ENCODE measurements at regions of chr10 and their contacts with region 1.

Region 1: DNA sequence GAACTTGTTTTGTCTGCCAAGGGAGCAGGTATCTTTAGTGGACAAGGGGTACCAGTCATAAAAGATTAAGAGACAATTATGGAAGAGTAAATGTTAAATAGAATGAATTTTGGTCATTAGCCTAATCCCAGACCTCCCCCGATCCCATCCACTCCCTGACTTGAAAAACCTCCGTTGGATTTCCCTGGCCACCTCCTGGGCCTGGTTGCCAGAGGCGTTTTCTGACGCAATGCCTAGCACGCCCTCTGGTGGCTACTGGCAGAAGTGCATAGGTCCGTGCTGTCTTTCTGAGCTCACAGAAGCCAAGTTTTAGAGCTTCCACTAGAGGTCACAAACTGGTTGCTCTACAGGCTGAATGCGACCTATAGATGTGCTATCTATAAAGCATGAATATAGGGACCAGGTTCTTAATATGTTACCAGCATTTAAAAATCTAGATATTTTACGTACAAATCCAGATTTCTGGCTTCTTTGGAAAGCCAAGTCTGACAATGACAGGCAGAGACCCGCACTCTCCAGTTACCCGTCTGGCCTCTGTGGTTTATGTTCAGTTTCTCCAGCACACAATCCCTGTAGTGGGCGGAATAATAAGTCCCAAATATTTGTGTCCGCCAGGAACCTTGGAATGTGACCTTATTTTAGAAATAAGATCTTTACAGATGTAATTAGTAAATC is 39.8 kb downstream of the SPOCK2 start:
- DNase-seq: peak; percentile 90
- ATAC-seq: peak; percentile 96
- H3K4me3 ChIP-seq: no peak overlapping the region
- H3K27ac ChIP-seq: no peak overlapping the region
- H3K4me1 ChIP-seq: peaks cover 1% of the 10 kb centered on the region; the same call in 1 of the 2 replicates
- H3K27me3 ChIP-seq: peaks cover 16% of the 10 kb centered on the region
- CTCF ChIP-seq: peak; percentile 100
- POLR2A ChIP-seq: 0 out of 2 replicates have a peak, but pooled peaks have one; percentile 31
- RAD21 ChIP-seq: peak; percentile 100

Region 2: DNA sequence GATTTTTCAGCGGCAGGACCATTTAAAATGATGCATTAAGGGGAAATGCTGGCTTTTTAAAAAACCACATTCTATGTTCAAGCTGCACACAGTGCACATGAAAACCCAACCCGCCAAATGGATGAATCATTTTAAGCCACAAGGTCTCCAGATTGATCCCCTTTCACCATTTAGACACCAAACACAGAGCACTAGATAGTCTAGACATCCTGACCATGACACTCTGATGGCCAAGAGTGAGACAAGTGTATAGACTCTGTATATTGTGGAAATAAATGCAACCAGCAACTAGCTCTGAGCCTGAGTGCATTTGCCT is 226.2 kb before region 1 on chr10:
- CTCF ChIA-PET with region 1: no interaction called
- POLR2A ChIA-PET with region 1: no interaction called
- dilution Hi-C with region 1: no loop called
- in situ Hi-C with region 1: no loop called
- intact Hi-C with region 1: no loop called
- DNase-seq: peak; percentile 49
- ATAC-seq: no peak
- H3K4me3 ChIP-seq: no peak overlapping the region
- H3K27ac ChIP-seq: no peak overlapping the region
- H3K4me1 ChIP-seq: no peaks in the 10 kb centered on the region
- H3K27me3 ChIP-seq: no peaks in the 10 kb centered on the region
- CTCF ChIP-seq: no peak
- POLR2A ChIP-seq: no peak
- RAD21 ChIP-seq: no peak

Region 3: DNA sequence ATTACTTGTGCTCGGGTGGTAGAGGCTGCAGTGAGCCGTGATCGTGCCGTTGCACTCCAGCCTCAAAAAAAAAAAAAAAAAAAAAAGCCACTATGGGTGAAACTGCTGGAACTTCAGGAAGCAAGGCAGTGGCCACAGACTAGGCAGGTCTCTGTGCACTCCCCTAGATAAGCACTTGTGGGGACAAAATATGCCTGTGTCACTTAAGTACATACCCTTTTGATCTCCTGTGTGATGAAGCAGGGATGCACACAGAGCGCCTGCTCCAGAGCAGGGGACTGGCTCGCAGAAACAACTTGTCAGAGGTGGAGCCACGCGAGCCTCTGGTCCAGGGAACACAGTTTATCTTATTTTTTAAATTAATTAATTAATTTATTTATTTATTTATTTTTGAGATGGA is 154.7 kb before region 1 on chr10:
- CTCF ChIA-PET with region 1: interaction called, 26 read pairs
- POLR2A ChIA-PET with region 1: interaction called, 3 read pairs
- dilution Hi-C with region 1: no loop called
- in situ Hi-C with region 1: no loop called
- intact Hi-C with region 1: loop called (anchors 1 kb)
- DNase-seq: no peak
- ATAC-seq: no peak
- H3K4me3 ChIP-seq: no peak overlapping the region
- H3K27ac ChIP-seq: no peak overlapping the region
- H3K4me1 ChIP-seq: peaks cover 4% of the 10 kb centered on the region; the same call in 1 of the 2 replicates
- H3K27me3 ChIP-seq: 0 out of 2 replicates have a peak, but pooled peaks cover 2% of the 10 kb centered on the region
- CTCF ChIP-seq: no peak
- POLR2A ChIP-seq: no peak
- RAD21 ChIP-seq: no peak

Region 4: DNA sequence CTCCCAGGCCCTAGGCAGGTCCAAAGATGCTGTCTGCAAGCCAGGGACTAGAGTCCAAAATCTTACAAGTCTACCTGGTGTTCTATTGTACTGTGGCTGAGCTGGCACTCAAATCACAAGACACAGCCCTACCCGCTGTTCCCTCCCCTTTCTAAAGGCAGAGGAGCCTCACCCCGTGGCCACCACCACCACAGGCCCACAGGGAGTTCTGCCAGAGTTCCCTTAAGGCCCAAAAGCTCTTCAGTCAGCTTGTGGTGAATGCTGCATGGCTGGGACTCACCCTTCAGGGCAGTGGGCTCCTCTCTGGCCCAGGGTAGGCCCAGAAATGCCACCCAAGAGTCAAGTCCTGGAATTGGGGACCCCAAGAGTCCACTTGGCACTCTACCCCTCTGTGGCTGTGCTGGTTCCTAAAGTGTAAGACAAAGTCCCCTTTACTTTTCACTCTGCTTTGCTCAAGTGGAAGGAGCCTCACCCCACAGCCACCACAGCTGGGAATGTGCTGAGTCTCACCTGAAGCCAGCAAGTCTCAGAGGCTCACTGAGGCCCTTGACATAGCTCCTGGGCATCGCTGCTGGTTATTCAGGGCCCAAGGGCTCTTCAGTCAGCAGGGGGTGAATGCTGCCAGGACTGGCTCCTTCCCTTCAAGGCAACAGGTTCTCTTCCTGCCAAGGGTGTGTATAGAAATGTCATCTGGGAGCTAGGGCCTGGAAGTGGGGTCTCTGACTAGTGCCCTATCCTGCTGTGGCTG is 148.7 kb before region 1 on chr10:
- CTCF ChIA-PET with region 1: interaction called, 26 read pairs
- POLR2A ChIA-PET with region 1: interaction called, 3 read pairs
- dilution Hi-C with region 1: no loop called
- in situ Hi-C with region 1: loop called (anchors 5 kb)
- intact Hi-C with region 1: loop called (anchors 1 kb)
- DNase-seq: no peak
- ATAC-seq: no peak
- H3K4me3 ChIP-seq: no peak overlapping the region
- H3K27ac ChIP-seq: no peak overlapping the region
- H3K4me1 ChIP-seq: no peaks in the 10 kb centered on the region
- H3K27me3 ChIP-seq: peaks cover 4% of the 10 kb centered on the region; the same call in 1 of the 2 replicates
- CTCF ChIP-seq: no peak
- POLR2A ChIP-seq: no peak
- RAD21 ChIP-seq: no peak

Region 5: DNA sequence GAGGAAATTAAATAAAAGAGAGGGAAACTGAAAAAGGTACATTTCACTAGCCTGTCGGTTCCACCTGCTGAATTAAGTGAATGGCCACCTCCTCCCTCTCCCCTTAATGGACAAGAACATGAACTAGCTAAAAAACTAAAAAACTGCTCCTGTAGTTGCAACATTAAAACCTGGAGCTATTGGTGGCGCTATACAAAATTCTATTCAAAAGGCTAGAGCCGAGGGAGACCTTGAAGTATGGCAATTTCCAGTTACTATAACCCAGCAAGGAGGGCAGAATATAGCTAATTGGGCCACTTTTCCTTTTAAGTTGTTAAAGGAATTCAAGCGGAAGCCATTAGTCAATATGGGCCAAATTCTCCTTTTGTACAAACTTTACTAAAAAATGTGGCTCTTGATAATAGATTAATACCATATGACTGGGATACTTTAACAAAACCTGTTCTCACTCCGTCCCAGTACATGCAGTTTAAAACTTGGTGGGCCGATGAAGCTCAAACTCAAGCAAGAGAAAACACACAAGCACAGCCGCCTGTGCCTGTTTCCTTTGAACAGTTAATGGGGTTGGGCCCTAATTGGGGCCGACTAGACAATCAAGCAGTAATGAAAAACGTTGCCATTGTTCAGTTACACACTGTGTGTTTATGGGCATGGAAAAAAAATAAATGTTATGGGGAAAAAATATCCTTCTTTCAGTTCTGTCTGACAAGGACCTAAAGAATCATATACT is 90.9 kb before region 1 on chr10:
- CTCF ChIA-PET with region 1: interaction called, 10 read pairs
- POLR2A ChIA-PET with region 1: no interaction called
- dilution Hi-C with region 1: no loop called
- in situ Hi-C with region 1: loop called (anchors 5 kb)
- intact Hi-C with region 1: loop called (anchors 1 kb)
- DNase-seq: no peak
- ATAC-seq: no peak
- H3K4me3 ChIP-seq: no peak overlapping the region
- H3K27ac ChIP-seq: no peak overlapping the region
- H3K4me1 ChIP-seq: no peaks in the 10 kb centered on the region
- H3K27me3 ChIP-seq: peaks cover 9% of the 10 kb centered on the region
- CTCF ChIP-seq: peak; percentile 28; the same call in 1 of the 2 replicates
- POLR2A ChIP-seq: no peak
- RAD21 ChIP-seq: no peak

Region 6: GRCh38 chr10:71963756-71964668 is 84.6 kb before region 1 on chr10 and contains the start of gene CHST3:
- CTCF ChIA-PET with region 1: interaction called, 5 read pairs
- POLR2A ChIA-PET with region 1: no interaction called
- dilution Hi-C with region 1: no loop called
- in situ Hi-C with region 1: loop called (anchors 5 kb)
- intact Hi-C with region 1: loop called (anchors 2 kb)
- DNase-seq: peak; percentile 56
- ATAC-seq: peak; percentile 73
- H3K4me3 ChIP-seq: peak within 1 kb of the TSS; percentile 77
- H3K27ac ChIP-seq: peak within 1 kb of the TSS; percentile 74
- H3K4me1 ChIP-seq: peaks cover 13% of the 10 kb centered on the region
- H3K27me3 ChIP-seq: no peaks in the 10 kb centered on the region
- CTCF ChIP-seq: no peak
- POLR2A ChIP-seq: peak; percentile 8; the same call in 1 of the 2 replicates
- RAD21 ChIP-seq: no peak
- total RNA-seq, gene CHST3: 9.0 and 10.6 TPM in 2 replicates

Region 7: DNA sequence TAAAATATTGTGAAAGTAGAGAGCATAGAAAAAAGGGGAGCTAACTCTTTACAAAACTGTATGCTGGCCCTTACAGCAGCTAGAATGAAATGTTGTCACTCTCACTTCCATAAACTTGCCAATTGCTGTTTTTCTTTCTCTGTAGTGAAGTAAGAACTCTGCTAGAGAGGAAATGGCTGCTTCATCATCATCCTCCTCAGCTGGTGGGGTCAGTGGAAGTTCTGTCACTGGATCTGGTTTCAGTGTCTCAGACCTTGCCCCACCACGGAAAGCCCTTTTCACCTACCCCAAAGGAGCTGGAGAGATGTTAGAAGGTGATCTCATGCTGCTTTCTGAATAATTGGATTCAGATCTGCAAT is 175.1 kb after region 1 on chr10:
- CTCF ChIA-PET with region 1: interaction called, 3 read pairs
- POLR2A ChIA-PET with region 1: no interaction called
- dilution Hi-C with region 1: no loop called
- in situ Hi-C with region 1: no loop called
- intact Hi-C with region 1: loop called (anchors 1 kb)
- DNase-seq: peak; percentile 45
- ATAC-seq: no peak
- H3K4me3 ChIP-seq: no peak overlapping the region
- H3K27ac ChIP-seq: no peak overlapping the region; the same call in 1 of the 2 replicates
- H3K4me1 ChIP-seq: peaks cover 3% of the 10 kb centered on the region; the same call in 1 of the 2 replicates
- H3K27me3 ChIP-seq: no peaks in the 10 kb centered on the region
- CTCF ChIP-seq: no peak
- POLR2A ChIP-seq: no peak
- RAD21 ChIP-seq: no peak